ENCODE measurements at regions of chr3 and their contacts with region 1.

Region 1: DNA sequence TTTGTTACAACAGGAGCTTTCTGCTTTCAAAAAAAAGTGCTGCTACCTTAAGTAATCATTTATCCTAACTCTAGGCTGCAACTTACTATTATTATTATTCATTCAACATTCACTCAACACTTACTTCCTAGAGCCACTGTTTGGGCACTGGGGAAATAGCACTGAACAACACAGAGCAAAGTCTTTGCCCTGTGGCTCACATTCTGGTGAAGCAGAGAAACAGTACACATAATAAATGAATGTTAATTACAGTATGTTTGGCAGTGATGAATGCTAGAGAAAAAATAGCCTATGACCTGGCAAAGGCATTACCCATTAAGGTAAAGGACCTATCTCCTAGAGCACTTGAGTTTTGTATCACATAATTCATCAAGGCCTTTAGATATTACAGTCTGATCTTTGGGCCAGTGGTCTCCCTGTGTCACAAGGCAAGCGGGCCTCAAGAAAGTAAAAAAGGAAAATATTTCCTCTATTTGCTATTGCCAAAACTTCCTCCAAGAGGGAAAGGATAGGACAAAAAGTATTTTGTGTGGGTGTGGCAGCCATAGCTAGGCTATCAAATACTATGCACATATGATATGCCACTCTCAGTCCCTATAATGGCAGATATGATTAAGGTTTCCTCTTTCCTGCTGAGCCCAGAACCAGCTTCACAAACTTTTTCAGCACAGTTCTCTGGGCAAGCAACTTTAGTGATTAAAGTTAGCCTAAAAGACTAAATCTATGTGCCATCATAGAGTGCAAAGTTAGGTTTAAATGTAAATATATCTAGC is 142.8 kb downstream of the FHIT start:
- DNase-seq: no peak
- H3K4me3 ChIP-seq: no peak overlapping the region
- H3K27ac ChIP-seq: no peak overlapping the region
- H3K4me1 ChIP-seq: no peaks in the 10 kb centered on the region
- H3K27me3 ChIP-seq: no peaks in the 10 kb centered on the region
- CTCF ChIP-seq: no peak
- POLR2A ChIP-seq: no peak

Region 2: GRCh38 chr3:59940718-59941117 is 1167.7 kb before region 1 on chr3:
- intact Hi-C with region 1: loop called (anchors 5 kb)
- DNase-seq: no peak
- H3K4me3 ChIP-seq: no peak overlapping the region
- H3K27ac ChIP-seq: no peak overlapping the region
- H3K4me1 ChIP-seq: no peaks in the 10 kb centered on the region
- H3K27me3 ChIP-seq: no peaks in the 10 kb centered on the region
- CTCF ChIP-seq: no peak
- POLR2A ChIP-seq: no peak

Region 3: DNA sequence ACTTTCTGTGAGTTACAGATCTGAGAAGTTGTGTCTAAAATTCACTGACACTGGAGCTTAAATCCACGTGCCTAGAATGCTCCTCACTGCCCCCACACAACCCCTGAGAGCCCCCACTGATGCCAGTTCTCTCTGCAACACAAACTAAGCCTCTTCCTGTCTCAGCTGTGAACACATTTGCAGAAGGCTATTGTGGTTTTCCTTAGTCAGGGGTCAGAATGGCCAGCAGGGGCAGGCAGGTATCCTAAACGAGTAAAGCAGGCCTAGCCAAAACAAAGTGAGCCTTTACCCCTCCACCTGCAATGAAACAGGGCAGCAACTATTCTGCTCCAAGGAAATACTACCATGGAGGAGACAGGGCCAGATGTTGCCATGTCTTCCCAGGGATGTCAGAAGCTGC is 64.3 kb after region 1 on chr3:
- intact Hi-C with region 1: no loop called
- DNase-seq: no peak
- H3K4me3 ChIP-seq: no peak overlapping the region
- H3K27ac ChIP-seq: no peak overlapping the region
- H3K4me1 ChIP-seq: no peaks in the 10 kb centered on the region
- H3K27me3 ChIP-seq: no peaks in the 10 kb centered on the region
- CTCF ChIP-seq: no peak
- POLR2A ChIP-seq: no peak